Mammary epithelial cell (primary cell): ENCODE measurements at regions of chr7 and their contacts with region 1.

Region 1: GRCh38 chr7:10889266-10889898 is 84.3 kb upstream of the PHF14 start:
- DNase-seq: peak; percentile 24
- H3K4me3 ChIP-seq: no peak overlapping the region
- H3K27ac ChIP-seq: no peak overlapping the region
- H3K4me1 ChIP-seq: no peaks in the 10 kb centered on the region
- H3K27me3 ChIP-seq: no peaks in the 10 kb centered on the region
- CTCF ChIP-seq: peak; percentile 92 to 93

Region 2: DNA sequence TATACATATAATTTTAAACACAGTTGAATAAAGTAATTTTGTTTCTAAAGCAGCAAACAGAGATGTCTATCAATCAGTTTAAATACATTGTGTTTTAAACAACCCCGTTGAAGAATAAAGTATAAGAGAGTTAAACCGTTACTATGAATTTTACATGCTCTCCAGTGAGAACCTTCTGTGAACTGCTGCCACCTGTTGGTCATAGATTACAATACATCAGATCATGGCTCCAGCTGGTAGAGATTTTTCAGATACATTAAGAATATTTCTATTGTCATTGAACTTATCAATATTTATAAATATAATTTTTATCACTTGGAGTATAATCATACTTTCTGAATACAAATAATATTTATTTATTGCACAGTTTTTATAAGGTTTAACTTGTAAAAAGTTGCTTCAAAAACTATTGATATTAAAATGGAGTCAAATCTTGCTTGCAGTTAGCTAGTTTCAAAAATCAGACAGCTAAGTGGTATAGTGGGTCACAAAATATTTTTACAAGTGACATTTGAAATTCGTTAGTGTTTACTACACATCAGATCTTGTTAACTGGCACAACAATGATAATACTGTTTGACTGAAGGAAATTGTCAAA is 476.9 kb before region 1 on chr7:
- CTCF ChIA-PET with region 1: no interaction called
- dilution Hi-C with region 1: no loop called
- in situ Hi-C with region 1: no loop called
- intact Hi-C with region 1: loop called (anchors 5 kb)
- DNase-seq: peak; percentile 11
- H3K4me3 ChIP-seq: no peak overlapping the region
- H3K27ac ChIP-seq: no peak overlapping the region
- H3K4me1 ChIP-seq: no peaks in the 10 kb centered on the region
- H3K27me3 ChIP-seq: no peaks in the 10 kb centered on the region
- CTCF ChIP-seq: peak; percentile 56 to 65

Region 3: GRCh38 chr7:10815546-10815945 is 73.8 kb before region 1 on chr7:
- CTCF ChIA-PET with region 1: no interaction called
- dilution Hi-C with region 1: no loop called
- in situ Hi-C with region 1: no loop called
- intact Hi-C with region 1: no loop called
- DNase-seq: no peak
- H3K4me3 ChIP-seq: no peak overlapping the region
- H3K27ac ChIP-seq: no peak overlapping the region
- H3K4me1 ChIP-seq: no peaks in the 10 kb centered on the region
- H3K27me3 ChIP-seq: no peaks in the 10 kb centered on the region
- CTCF ChIP-seq: no peak

Region 4: GRCh38 chr7:10939911-10940703 is 50.7 kb after region 1 on chr7:
- CTCF ChIA-PET with region 1: no interaction called
- dilution Hi-C with region 1: no loop called
- in situ Hi-C with region 1: no loop called
- intact Hi-C with region 1: no loop called
- DNase-seq: peak; percentile 89
- H3K4me3 ChIP-seq: peak overlapping the region; percentile 58 to 81 (median 70)
- H3K27ac ChIP-seq: peak overlapping the region; percentile 96
- H3K4me1 ChIP-seq: peaks cover 12% of the 10 kb centered on the region
- H3K27me3 ChIP-seq: no peaks in the 10 kb centered on the region
- CTCF ChIP-seq: no peak

Region 5: GRCh38 chr7:11212080-11212711 is 322.8 kb after region 1 on chr7:
- CTCF ChIA-PET with region 1: no interaction called
- dilution Hi-C with region 1: no loop called
- in situ Hi-C with region 1: no loop called
- intact Hi-C with region 1: loop called (anchors 1 kb)
- DNase-seq: peak; percentile 28
- H3K4me3 ChIP-seq: no peak overlapping the region
- H3K27ac ChIP-seq: no peak overlapping the region
- H3K4me1 ChIP-seq: no peaks in the 10 kb centered on the region
- H3K27me3 ChIP-seq: no peaks in the 10 kb centered on the region
- CTCF ChIP-seq: peak; percentile 76 to 82

Region 6: GRCh38 chr7:11343818-11344413 is 454.5 kb after region 1 on chr7:
- CTCF ChIA-PET with region 1: no interaction called
- dilution Hi-C with region 1: no loop called
- in situ Hi-C with region 1: no loop called
- intact Hi-C with region 1: loop called (anchors 5 kb)
- DNase-seq: peak; percentile 28
- H3K4me3 ChIP-seq: no peak overlapping the region
- H3K27ac ChIP-seq: no peak overlapping the region
- H3K4me1 ChIP-seq: no peaks in the 10 kb centered on the region
- H3K27me3 ChIP-seq: no peaks in the 10 kb centered on the region
- CTCF ChIP-seq: peak; percentile 65 to 70